ENCODE measurements at regions of chr17 and their contacts with region 1.

Region 1: DNA sequence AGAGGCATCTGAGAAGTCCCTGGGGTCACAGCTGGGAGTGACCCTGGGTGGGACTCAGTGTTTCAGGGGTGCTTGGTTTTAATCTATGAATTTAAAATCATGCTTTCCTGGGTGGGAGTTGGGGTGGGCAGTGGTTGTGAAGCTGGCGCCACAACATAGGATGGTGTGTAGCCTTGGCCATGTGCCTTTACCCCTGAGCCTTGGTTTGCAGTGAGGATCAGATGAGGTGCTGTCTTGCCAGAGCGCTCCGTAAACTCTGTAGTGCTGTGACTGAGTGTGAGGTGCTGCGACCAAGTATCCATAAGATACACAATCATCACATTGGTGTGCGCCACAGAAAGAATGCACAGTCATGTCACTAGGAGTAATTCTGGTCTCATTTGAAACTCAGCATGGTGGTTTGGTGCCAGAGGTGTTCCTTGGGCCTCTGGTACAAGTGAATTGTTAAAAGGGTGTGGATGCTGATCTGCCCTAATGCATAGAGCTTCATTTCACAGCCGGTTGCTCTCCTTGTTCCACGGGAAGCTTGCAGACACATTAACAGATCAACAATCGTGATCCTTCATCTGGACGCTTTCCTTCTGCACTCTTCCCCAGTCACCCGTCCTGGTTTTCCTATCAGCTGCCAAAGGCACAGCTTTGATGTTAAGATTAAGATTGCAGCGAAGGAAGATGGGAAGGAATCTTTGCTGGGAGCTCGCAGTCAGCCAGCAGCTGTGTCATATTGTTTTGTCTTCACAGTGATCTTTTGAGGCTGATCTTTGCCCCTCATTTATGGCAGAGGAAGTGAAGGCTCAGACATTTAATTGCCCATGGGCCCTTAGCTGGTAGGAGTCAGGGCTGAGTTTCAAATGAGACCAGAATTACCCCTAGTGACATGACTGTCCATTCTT is 79.0 kb downstream of the KSR1 start:
- DNase-seq: no peak
- ATAC-seq: no peak
- H3K4me3 ChIP-seq: no peak overlapping the region
- H3K27ac ChIP-seq: no peak overlapping the region
- H3K4me1 ChIP-seq: peaks cover 7% of the 10 kb centered on the region
- H3K27me3 ChIP-seq: no peaks in the 10 kb centered on the region
- CTCF ChIP-seq: no peak

Region 2: GRCh38 chr17:27586203-27586721 is 51.0 kb after region 1 on chr17:
- intact Hi-C with region 1: loop called in 1 of 2 experiments (anchors 5 kb)
- DNase-seq: no peak
- ATAC-seq: no peak
- H3K4me3 ChIP-seq: no peak overlapping the region
- H3K27ac ChIP-seq: no peak overlapping the region
- H3K4me1 ChIP-seq: peaks cover 10% of the 10 kb centered on the region
- H3K27me3 ChIP-seq: no peaks in the 10 kb centered on the region
- CTCF ChIP-seq: no peak